Lower lobe of right lung (tissue), 2 donors: ENCODE measurements at regions of chr4 and their contacts with region 1.

Region 1: DNA sequence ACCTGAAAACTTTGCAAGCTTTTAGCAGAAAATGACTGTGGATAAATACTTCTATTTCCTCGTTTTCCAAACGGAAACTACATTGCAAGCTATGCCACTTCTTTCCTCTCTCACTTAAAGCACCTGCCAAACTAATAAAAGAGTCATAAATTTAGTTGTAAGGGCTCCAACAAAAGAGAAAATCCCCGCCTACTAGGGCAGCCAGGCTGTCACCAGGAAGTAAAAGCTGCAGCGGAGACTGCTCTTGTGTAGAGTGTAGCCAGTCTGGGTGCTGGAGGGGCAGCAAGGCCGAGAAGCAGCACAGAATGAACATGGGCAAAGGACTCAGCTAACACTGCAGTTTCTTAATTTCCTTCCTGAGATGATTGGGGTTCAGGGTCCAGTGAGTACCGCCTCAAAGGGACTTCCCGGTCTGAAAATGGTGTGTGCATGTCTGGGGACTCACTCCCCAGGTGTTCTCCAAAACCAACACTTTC is 89.3 kb upstream of the MAML3 start:
- DNase-seq: peak; percentile 47
- ATAC-seq: peak; percentile 65 to 80
- H3K4me3 ChIP-seq: no peak overlapping the region
- H3K27ac ChIP-seq: peak overlapping the region; percentile 71
- H3K4me1 ChIP-seq: peaks cover 23% of the 10 kb centered on the region
- H3K27me3 ChIP-seq: no peaks in the 10 kb centered on the region
- CTCF ChIP-seq: no peak

Region 2: DNA sequence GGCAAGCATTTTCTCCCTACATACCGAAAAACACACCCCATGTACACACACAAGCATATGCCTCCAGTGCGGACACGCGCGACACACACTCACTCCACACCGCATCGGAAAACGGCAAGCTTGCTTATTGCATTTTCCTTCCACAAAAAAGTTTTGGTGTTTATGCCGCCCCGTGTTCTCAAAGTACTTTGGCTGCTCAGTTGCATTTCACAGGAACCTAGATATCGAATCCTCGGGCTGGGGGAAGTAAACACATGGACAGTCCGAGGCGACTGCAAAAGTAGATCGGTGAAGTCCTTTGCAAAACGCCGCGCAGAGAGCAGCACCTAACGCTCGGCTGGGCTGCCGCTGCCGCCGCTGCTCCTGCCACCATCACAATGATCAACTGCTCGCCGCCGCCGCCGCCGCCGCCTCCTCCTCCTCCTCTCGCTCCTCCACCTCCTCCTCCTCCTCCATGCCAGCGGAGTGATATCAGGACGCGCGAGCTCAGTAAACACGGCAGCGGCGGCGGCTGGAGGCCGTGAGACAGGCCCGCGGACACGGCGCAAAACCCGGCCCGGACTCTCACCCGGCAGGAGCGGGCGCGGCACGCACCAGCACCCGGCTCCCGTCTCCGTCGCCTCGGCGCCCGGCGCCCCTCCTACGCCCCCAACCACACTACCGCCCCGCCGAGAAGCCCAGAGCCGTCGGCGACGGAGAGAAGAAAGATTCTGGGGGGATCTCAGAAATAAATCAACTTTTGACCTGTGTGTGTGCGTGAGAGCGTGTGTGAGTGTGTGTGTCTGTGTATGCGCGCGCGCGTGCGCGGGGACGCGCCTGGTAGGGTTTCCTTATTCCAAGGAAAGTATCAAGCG is 89.4 kb before region 1 on chr4 and contains the start of gene MAML3:
- intact Hi-C with region 1: loop called (anchors 10 kb)
- DNase-seq: peak; percentile 96
- ATAC-seq: peak; percentile 72 to 80
- H3K4me3 ChIP-seq: peak within 1 kb of the TSS; percentile 65
- H3K27ac ChIP-seq: peak within 1 kb of the TSS; percentile 88
- H3K4me1 ChIP-seq: peaks cover 17% of the 10 kb centered on the region
- H3K27me3 ChIP-seq: no peaks in the 10 kb centered on the region
- CTCF ChIP-seq: no peak
- total RNA-seq, gene MAML3: 12.5 TPM